Activated naive CD4-positive, alpha-beta T cell treated with anti-CD3 and anti-CD28 coated beads for 36 hours (primary cell): ENCODE measurements at regions of chr9 and their contacts with region 1.

Region 1: DNA sequence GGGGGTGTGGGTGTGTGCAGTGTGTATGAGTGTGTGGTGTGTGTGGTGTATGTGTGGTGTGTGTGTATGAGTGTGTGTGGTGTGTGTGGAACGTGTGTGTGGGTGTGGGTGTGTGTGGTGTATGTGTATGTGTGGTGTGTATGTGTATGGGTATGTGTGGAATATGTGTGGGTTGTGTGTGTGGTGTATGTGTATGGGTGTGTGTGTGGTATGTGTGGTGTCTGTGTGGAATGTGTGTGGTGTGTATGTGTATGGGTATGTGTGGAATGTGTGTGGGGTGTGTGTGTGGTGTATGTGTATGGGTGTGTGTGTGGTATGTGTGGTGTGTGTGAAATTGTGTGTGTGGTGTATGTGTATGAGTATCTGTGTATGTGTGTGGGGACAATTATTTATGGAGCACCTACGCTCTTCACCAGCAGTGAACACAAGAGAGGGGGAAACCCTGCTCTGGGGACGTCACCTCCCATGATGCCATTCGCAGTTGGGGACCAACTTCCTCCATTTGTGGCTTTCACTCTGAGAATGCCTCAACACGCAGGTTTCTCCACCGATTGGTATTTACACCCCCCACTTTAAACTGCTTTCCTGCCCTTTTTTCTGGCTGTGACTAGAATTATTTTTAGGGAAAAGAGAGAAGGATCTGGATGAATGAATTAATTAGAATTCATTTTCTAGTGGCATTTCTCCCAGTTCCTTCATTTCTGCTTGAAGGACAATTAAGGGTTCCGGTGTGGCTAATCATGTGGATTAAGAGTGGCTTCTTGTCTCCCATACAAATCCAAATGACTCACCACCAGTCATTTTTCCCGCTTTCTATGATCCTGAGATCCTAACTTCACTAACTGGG is 238.1 kb downstream of the ROR2 start:
- DNase-seq: peak; percentile 92
- H3K4me3 Mint-ChIP-seq: no peak overlapping the region
- H3K27ac Mint-ChIP-seq: no peak overlapping the region
- H3K4me1 Mint-ChIP-seq: no peaks in the 10 kb centered on the region
- H3K27me3 Mint-ChIP-seq: peaks cover 28% of the 10 kb centered on the region

Region 2: DNA sequence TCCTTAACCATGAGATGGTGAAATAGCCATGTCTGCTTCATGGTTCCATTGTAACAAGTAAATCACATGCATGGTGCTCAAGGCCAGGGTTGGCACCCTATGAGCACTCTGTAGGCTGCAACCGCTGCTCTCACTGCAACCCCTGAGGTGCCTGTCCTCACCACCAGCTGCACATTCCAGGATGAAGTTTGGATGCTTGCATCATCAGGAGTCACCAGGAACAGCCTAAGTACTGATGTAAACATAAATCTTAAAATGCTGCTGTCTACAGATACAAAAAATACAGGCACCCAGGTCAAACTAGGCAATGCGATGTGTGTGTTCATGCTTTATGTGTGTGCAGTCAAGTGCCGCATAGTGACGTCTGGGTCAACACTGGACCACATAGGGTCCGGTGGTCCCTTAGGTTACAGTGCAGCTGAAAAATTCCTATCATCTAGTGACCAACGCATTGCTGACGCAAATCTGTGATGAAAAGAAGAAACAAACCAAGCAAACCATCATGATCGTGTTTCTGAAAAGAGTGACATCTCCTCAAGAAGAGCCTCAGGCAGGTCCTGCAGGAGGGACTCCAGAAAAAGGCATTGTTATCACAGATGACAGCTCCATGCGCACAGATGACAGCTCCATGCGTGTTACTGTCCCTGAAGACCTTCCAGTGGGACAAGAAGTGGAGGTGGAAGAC is 585.1 kb before region 1 on chr9:
- CTCF ChIA-PET with region 1: no interaction called
- intact Hi-C with region 1: no loop called
- DNase-seq: no peak
- H3K4me3 Mint-ChIP-seq: no peak overlapping the region
- H3K27ac Mint-ChIP-seq: no peak overlapping the region
- H3K4me1 Mint-ChIP-seq: peaks cover 21% of the 10 kb centered on the region
- H3K27me3 Mint-ChIP-seq: peaks cover 6% of the 10 kb centered on the region

Region 3: DNA sequence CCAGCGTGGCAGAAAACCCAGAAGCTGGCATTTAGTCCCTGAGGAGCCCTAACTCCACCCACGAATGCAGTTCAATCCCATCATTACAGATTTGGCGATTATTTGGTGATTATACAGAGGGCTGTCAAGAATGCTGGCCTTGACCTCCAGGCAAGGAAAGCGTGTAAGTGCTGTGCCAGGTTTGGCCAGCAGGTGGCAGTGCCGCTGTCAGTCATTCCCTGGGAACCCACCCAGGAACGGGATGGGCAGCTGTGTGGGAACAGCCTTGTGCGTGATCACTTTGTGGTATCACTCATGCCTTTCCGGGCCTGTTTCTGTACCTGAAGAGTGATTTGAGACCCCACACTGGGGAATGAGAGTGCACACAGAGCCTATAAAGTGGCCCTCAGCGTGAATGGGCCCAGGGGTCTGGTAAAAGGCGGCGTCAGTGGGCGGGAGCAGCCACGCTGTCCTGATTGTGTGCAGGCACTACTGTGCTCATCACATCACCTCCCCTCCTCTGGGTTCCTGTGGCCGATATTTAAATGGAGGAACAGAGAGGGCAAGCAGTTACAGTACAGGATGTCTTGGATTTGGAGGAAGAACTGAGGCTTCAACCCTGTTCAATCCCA is 22.5 kb after region 1 on chr9:
- CTCF ChIA-PET with region 1: interaction called, 4 read pairs
- intact Hi-C with region 1: loop called (anchors 2 kb)
- DNase-seq: peak; percentile 71
- H3K4me3 Mint-ChIP-seq: no peak overlapping the region
- H3K27ac Mint-ChIP-seq: no peak overlapping the region
- H3K4me1 Mint-ChIP-seq: no peaks in the 10 kb centered on the region
- H3K27me3 Mint-ChIP-seq: peaks cover 3% of the 10 kb centered on the region